Activated naive CD8-positive, alpha-beta T cell treated with anti-CD3 and anti-CD28 coated beads, Interleukin-2, amount 10 ng/mL, durations not matched to agents 7 days and 5 days (primary cell): ENCODE measurements at regions of chr11 and their contacts with region 1.

Region 1: DNA sequence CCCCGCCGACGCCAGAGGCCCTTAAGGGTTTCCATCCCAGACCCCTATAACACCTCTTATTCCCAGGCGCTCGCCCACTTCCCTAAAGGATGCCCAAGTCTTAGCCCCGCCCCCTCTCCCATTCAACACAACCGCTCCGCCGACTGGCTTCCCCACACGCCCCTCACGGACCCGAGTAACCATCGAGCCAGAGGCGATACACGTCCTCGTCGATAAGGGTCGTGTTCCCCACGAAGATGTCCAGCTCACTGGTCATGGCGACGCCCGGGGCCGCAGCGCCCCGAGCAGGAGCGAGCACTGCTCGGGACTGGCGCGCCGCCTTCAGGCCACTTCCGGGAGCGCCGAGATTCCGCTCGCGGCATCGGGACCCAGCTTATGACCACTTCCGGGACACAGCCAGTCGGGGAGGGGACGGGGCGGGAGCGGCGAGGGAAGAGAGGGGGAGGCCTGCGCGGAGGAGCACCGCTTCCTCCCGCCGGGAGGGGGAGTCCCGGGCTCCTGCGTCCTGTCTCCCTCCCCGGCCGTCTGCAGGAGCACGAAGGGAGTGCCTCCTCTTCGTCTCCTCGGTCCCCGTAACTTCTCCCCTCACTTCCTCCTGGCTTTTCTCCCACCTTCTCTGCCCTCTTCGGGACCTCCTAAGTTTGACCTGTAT is at the start of gene FIBP:
- DNase-seq: peak; percentile 96
- ATAC-seq: peak; percentile 56
- H3K4me3 Mint-ChIP-seq: peak within 1 kb of the TSS; percentile 88
- H3K27ac Mint-ChIP-seq: peak within 1 kb of the TSS; percentile 99
- H3K4me1 Mint-ChIP-seq: peaks cover 46% of the 10 kb centered on the region
- H3K27me3 Mint-ChIP-seq: no peaks in the 10 kb centered on the region
- total RNA-seq, gene FIBP: 78.2 to 82.9 TPM

Region 2: GRCh38 chr11:65652511-65653231 is 235.6 kb before region 1 on chr11:
- POLR2A ChIA-PET with region 1: no interaction called
- DNase-seq: peak; percentile 99
- ATAC-seq: peak; percentile 88
- H3K4me3 Mint-ChIP-seq: peak overlapping the region; percentile 90
- H3K27ac Mint-ChIP-seq: peak overlapping the region; percentile 92
- H3K4me1 Mint-ChIP-seq: peaks cover 36% of the 10 kb centered on the region
- H3K27me3 Mint-ChIP-seq: no peaks in the 10 kb centered on the region

Region 3: DNA sequence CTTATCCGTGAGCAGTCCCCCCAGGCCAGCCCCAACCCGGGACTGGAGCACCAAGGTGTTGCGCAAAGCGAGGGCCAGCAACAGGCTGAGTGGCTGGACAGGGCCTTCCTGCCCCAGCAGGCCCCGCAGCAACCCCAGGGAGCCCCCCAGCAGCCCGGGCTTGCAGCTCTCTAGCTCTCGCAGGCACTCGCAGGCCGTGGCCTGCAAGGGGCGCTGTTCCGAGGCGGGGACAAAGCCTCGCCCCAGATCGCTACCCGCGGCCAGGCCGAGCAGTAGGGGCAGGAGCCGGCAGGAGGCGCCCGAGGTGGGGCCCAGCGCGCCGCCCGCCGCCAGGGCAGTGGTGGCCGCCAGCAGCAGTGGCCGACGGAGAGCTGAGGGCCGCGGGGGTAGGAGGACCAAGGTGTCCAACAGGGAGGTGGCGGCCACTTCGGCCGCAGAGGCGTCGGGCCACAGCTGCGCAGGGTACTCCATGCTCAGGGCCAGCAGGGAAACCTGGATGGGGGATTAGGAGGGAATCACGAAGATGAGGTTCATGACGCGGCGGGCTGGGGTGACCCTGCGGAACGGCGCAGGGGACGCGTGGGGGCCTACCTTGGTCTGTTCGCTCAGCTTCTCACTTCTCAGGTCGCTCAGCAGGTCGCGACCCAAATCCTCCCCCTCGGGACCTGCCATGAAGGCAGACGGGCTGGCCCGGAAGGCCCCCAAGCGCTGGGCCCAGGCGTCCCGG is 108.3 kb before region 1 on chr11:
- POLR2A ChIA-PET with region 1: interaction called, 17 read pairs
- DNase-seq: peak; percentile 95
- ATAC-seq: peak; percentile 77
- H3K4me3 Mint-ChIP-seq: peak overlapping the region; percentile 89
- H3K27ac Mint-ChIP-seq: peak overlapping the region; percentile 91
- H3K4me1 Mint-ChIP-seq: peaks cover 15% of the 10 kb centered on the region
- H3K27me3 Mint-ChIP-seq: peaks cover under 1% of the 10 kb centered on the region

Region 4: GRCh38 chr11:65873318-65874156 is 14.8 kb before region 1 on chr11:
- POLR2A ChIA-PET with region 1: interaction called, 65 read pairs
- DNase-seq: peak; percentile 100
- ATAC-seq: peak; percentile 85
- H3K4me3 Mint-ChIP-seq: peak overlapping the region; percentile 77
- H3K27ac Mint-ChIP-seq: peak overlapping the region; percentile 77
- H3K4me1 Mint-ChIP-seq: peaks cover 33% of the 10 kb centered on the region
- H3K27me3 Mint-ChIP-seq: no peaks in the 10 kb centered on the region

Region 5: GRCh38 chr11:65911682-65912568 is 23.6 kb after region 1 on chr11:
- POLR2A ChIA-PET with region 1: interaction called, 35 read pairs
- DNase-seq: no peak
- ATAC-seq: no peak
- H3K4me3 Mint-ChIP-seq: peak overlapping the region; percentile 16
- H3K27ac Mint-ChIP-seq: peak overlapping the region; percentile 0
- H3K4me1 Mint-ChIP-seq: peaks cover 24% of the 10 kb centered on the region
- H3K27me3 Mint-ChIP-seq: peaks cover 2% of the 10 kb centered on the region

Region 6: GRCh38 chr11:65927904-65928397 is 39.7 kb after region 1 on chr11:
- POLR2A ChIA-PET with region 1: interaction called, 170 read pairs
- DNase-seq: peak; percentile 76
- ATAC-seq: peak; percentile 85
- H3K4me3 Mint-ChIP-seq: peak overlapping the region; percentile 81
- H3K27ac Mint-ChIP-seq: peak overlapping the region; percentile 93
- H3K4me1 Mint-ChIP-seq: peaks cover 51% of the 10 kb centered on the region
- H3K27me3 Mint-ChIP-seq: no peaks in the 10 kb centered on the region

Region 7: GRCh38 chr11:66001942-66002647 is 113.8 kb after region 1 on chr11 and contains the starts of genes BANF1 and EIF1AD:
- POLR2A ChIA-PET with region 1: interaction called, 19 read pairs
- DNase-seq: peak; percentile 90
- ATAC-seq: peak; percentile 85
- H3K4me3 Mint-ChIP-seq: peak within 1 kb of the TSS; percentile 100
- H3K27ac Mint-ChIP-seq: peak within 1 kb of the TSS; percentile 99
- H3K4me1 Mint-ChIP-seq: peaks cover 31% of the 10 kb centered on the region
- H3K27me3 Mint-ChIP-seq: no peaks in the 10 kb centered on the region
- total RNA-seq, gene BANF1: 183 to 187 TPM
- total RNA-seq, gene EIF1AD: 53.4 to 57.5 TPM

Region 8: DNA sequence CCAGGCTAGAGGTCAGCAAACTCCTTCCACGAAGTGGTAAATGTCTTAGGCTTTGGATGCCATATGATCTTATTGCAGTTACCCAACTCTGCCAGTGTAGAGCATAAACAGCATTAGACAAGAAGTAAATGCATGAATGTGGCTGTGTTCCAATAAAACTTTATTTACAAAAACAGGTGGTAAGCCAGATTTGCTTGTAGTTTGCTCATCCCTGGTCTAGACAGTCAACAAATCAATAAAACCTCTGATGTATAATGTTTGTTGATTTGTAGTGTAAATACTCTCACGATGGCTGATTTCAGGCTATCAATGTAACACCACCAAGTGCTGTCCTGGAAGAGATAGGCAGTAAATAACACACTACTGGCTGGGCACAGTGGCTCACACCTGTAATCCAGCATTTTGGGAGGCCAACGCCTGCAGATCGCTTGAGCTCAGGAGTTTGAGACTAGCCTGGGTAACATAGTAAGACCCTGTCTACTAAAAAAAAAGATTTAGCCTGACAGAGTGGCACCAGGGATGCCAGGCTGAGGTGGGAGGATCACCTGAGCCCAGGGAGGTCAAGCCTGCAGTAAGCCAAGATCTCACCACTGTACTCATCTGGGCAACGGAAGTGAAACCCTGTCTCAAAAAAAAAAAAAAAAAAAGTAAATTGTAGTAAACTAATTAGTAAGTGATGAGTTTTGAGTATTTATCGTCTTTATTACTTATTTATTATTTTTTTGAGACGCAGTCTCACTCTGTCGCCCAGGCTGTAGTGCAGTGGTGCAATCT is 144.9 kb after region 1 on chr11:
- POLR2A ChIA-PET with region 1: no interaction called
- DNase-seq: no peak
- ATAC-seq: no peak
- H3K4me3 Mint-ChIP-seq: no peak overlapping the region
- H3K27ac Mint-ChIP-seq: no peak overlapping the region
- H3K4me1 Mint-ChIP-seq: no peaks in the 10 kb centered on the region
- H3K27me3 Mint-ChIP-seq: peaks cover 6% of the 10 kb centered on the region